CD4-positive, alpha-beta memory T cell (primary cell): ENCODE measurements at regions of chr6 and their contacts with region 1.

Region 1: GRCh38 chr6:24991810-24992467 is 56.2 kb upstream of the RIPOR2 start:
- DNase-seq: peak; percentile 80 to 84 (median 80)
- H3K4me3 ChIP-seq: peak overlapping the region in 1 of 2 donors; percentile 31
- H3K4me3 Mint-ChIP-seq: peak overlapping the region in 7 of 8 donors; percentile 29 to 83 (median 72)
- H3K27ac ChIP-seq: peak overlapping the region; percentile 29
- H3K27ac Mint-ChIP-seq: peak overlapping the region; percentile 75 to 94 (median 83)
- H3K4me1 ChIP-seq: peaks cover 66% of the 10 kb centered on the region
- H3K4me1 Mint-ChIP-seq: peaks cover 61 to 84% (median 75%) of the 10 kb centered on the region in 4 donors
- H3K27me3 ChIP-seq: no peaks in the 10 kb centered on the region
- H3K27me3 Mint-ChIP-seq: no peaks in the 10 kb centered on the region

Region 2: GRCh38 chr6:24864343-24864742 is 127.6 kb before region 1 on chr6:
- CTCF ChIA-PET with region 1: interaction called, 133 read pairs
- POLR2A ChIA-PET with region 1: interaction called, 52 read pairs
- intact Hi-C with region 1: no loop called
- DNase-seq: no peak
- H3K4me3 ChIP-seq: no peak overlapping the region
- H3K4me3 Mint-ChIP-seq: peak overlapping the region in 4 of 8 donors; percentile 18 to 63 (median 40)
- H3K27ac ChIP-seq: peak overlapping the region; percentile 14
- H3K27ac Mint-ChIP-seq: peak overlapping the region; percentile 60 to 88 (median 82)
- H3K4me1 ChIP-seq: peaks cover 95% of the 10 kb centered on the region
- H3K4me1 Mint-ChIP-seq: peaks cover 65 to 98% (median 79%) of the 10 kb centered on the region in 4 donors
- H3K27me3 ChIP-seq: no peaks in the 10 kb centered on the region
- H3K27me3 Mint-ChIP-seq: no peaks in the 10 kb centered on the region

Region 3: DNA sequence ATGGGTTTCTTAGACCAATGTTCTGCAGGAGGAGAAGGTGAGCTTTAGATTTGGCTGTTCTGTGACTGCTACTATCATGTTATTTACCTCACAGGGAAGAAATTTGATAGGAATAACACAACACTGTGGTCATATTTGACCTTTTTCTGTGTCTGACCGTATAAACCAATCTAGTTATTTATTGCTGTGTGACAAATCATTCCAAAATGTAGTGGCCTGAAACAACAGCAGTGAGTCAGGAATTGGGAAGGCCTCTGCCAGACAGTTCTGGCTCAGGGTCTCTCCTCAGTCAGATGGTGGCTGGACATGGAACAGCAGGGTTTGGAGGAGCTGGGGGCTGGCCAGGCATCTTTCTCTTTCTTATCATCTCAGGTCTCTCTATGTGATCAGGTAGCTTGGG is 89.2 kb before region 1 on chr6:
- CTCF ChIA-PET with region 1: interaction called, 95 read pairs
- POLR2A ChIA-PET with region 1: interaction called, 91 read pairs
- intact Hi-C with region 1: no loop called
- DNase-seq: no peak
- H3K4me3 ChIP-seq: no peak overlapping the region
- H3K4me3 Mint-ChIP-seq: peak overlapping the region in 6 of 8 donors; percentile 16 to 85 (median 63)
- H3K27ac ChIP-seq: no peak overlapping the region
- H3K27ac Mint-ChIP-seq: peak overlapping the region; percentile 73 to 94 (median 89)
- H3K4me1 ChIP-seq: peaks cover 99% of the 10 kb centered on the region
- H3K4me1 Mint-ChIP-seq: peaks cover 81 to 99% (median 92%) of the 10 kb centered on the region in 4 donors
- H3K27me3 ChIP-seq: no peaks in the 10 kb centered on the region
- H3K27me3 Mint-ChIP-seq: no peaks in the 10 kb centered on the region

Region 4: DNA sequence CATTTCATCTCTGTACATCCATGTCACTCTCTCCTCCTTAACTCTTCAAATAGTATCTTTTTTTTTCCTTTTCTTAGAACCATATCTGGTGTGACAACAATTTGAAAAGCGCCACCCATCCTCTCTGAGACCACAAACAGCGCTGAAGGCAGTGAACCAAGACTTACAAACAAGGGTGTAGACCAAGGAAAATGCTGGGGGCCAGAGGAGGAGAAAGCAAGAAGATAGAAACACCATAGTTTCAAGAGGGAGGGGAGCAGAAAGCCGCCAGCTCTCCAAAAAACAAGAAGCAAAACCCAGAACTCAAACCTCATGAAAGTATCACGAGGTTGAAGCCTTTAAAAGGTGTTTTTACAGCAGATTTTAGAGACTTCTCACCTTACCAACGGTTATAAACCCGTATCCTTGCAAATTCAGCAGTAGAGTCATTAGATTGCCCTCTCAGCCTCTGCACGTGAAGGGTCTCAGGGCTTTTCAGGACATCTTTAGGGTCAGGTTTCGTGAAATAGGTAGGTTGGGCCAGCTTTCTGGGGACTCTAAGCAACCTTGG is 42.8 kb before region 1 on chr6:
- CTCF ChIA-PET with region 1: interaction called, 140 read pairs
- POLR2A ChIA-PET with region 1: interaction called, 157 read pairs
- intact Hi-C with region 1: loop called (anchors 1 kb)
- DNase-seq: peak; percentile 70 to 86 (median 83)
- H3K4me3 ChIP-seq: peak overlapping the region; percentile 19 to 47
- H3K4me3 Mint-ChIP-seq: peak overlapping the region; percentile 57 to 90 (median 82)
- H3K27ac ChIP-seq: peak overlapping the region; percentile 51
- H3K27ac Mint-ChIP-seq: peak overlapping the region; percentile 84 to 97 (median 95)
- H3K4me1 ChIP-seq: peaks cover 79% of the 10 kb centered on the region
- H3K4me1 Mint-ChIP-seq: peaks cover 56 to 87% (median 72%) of the 10 kb centered on the region in 4 donors
- H3K27me3 ChIP-seq: no peaks in the 10 kb centered on the region
- H3K27me3 Mint-ChIP-seq: no peaks in the 10 kb centered on the region

Region 5: GRCh38 chr6:25006565-25007001 is 14.6 kb after region 1 on chr6:
- CTCF ChIA-PET with region 1: interaction called, 27 read pairs
- POLR2A ChIA-PET with region 1: interaction called, 11 read pairs
- intact Hi-C with region 1: loop called (anchors 2 kb)
- DNase-seq: peak in 4 of 5 donors; percentile 30 to 74 (median 42)
- H3K4me3 ChIP-seq: peak overlapping the region in 1 of 2 donors; percentile 15
- H3K4me3 Mint-ChIP-seq: peak overlapping the region; percentile 61 to 82 (median 75)
- H3K27ac ChIP-seq: peak overlapping the region; percentile 58
- H3K27ac Mint-ChIP-seq: peak overlapping the region; percentile 68 to 94 (median 90)
- H3K4me1 ChIP-seq: peaks cover 73% of the 10 kb centered on the region
- H3K4me1 Mint-ChIP-seq: peaks cover 59 to 90% (median 70%) of the 10 kb centered on the region in 4 donors
- H3K27me3 ChIP-seq: no peaks in the 10 kb centered on the region
- H3K27me3 Mint-ChIP-seq: no peaks in the 10 kb centered on the region

Region 6: DNA sequence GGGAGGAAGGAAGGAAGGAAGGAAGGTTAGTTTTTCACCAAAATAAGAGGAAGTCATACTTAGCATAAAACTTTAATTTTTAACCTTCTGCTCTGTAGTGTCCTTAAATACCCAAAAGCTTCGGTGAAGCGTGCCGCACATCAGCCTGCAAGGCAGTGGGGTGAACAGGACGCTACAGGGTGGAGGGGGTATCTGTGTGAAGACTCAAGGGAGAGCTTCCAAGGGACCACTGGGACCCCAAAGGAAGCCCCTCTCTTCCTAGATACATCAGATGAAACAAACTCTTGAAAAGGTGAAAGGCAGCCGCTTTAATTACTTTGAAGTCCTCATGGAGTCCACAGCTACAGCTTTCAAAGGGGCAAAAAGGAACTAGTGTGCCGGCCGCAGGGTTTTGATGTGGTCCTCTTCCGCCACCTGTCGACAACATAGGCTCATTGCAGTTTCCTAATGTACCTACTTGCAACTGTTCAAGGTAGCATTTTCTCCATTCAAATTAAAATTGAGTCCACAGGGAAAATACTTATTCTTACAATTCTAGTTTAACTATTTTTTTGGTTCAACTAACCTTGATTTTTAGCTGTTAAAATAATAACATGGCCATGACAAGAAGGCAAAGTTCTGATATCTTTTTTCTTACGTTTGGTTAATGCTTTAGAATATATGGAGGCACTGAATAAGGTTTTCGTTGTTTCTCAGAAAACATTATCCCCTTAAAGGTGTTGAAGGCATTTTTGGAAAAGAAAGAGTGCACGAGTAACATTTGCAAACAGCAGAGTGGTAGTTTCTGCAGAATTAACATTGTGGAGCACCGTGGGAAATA is 78.8 kb after region 1 on chr6:
- CTCF ChIA-PET with region 1: interaction called, 18 read pairs
- POLR2A ChIA-PET with region 1: interaction called, 3 read pairs
- intact Hi-C with region 1: loop called (anchors 1 kb)
- DNase-seq: peak; percentile 84 to 85 (median 85)
- H3K4me3 ChIP-seq: no peak overlapping the region
- H3K4me3 Mint-ChIP-seq: peak overlapping the region in 7 of 8 donors; percentile 5 to 74 (median 48)
- H3K27ac ChIP-seq: no peak overlapping the region
- H3K27ac Mint-ChIP-seq: peak overlapping the region; percentile 80 to 94 (median 84)
- H3K4me1 ChIP-seq: no peaks in the 10 kb centered on the region
- H3K4me1 Mint-ChIP-seq: peaks cover 4 to 8% (median 6%) of the 10 kb centered on the region in 4 donors
- H3K27me3 ChIP-seq: no peaks in the 10 kb centered on the region
- H3K27me3 Mint-ChIP-seq: no peaks in the 10 kb centered on the region